ENCODE measurements at regions of chr18 and their contacts with region 1.

Region 1: DNA sequence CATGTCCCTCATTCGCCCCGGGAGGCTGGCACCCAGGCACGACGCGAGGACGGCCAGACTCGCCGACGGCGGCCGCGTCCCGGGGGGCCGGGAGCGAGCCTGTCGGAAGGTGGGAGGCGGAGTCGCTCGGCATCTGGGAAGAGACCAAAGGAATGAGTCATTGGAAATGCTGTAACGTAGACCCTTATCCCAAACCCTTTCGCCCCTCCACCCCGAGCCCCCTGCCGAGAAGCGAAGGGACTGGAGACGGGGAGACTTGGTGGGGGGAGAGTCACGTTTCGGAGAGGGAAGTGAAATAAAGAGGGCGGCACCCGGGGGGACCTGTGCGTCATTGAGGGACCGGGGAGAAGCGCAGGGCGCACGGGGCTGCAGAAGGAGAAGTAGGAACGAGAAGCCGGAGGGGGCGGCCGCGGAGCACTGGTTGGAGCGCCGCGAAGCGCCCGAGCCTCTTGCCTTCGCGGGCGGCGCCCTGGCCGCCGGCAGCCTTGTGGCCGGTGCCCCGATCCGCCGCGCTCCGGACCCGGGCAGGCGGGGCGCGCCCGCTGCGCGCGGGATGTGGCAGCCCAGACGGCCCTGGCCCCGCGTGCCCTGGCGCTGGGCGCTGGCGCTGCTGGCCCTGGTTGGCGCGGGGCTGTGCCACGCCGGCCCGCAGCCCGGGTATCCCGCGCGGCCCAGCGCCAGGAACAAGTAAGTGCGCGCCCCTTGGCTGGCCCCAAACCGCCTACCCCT is at the start of gene EMILIN2:
- DNase-seq: peak; percentile 96
- total RNA-seq, gene EMILIN2: 21.0 to 32.4 TPM

Region 2: GRCh38 chr18:2368102-2368501 is 478.7 kb before region 1 on chr18:
- intact Hi-C with region 1: loop called in 1 of 2 experiments (anchors 5 kb)
- DNase-seq: no peak

Region 3: GRCh38 chr18:2906704-2907549 is 60.1 kb after region 1 on chr18:
- intact Hi-C with region 1: loop called in 1 of 2 experiments (anchors 2 kb)
- DNase-seq: peak; percentile 81

Region 4: DNA sequence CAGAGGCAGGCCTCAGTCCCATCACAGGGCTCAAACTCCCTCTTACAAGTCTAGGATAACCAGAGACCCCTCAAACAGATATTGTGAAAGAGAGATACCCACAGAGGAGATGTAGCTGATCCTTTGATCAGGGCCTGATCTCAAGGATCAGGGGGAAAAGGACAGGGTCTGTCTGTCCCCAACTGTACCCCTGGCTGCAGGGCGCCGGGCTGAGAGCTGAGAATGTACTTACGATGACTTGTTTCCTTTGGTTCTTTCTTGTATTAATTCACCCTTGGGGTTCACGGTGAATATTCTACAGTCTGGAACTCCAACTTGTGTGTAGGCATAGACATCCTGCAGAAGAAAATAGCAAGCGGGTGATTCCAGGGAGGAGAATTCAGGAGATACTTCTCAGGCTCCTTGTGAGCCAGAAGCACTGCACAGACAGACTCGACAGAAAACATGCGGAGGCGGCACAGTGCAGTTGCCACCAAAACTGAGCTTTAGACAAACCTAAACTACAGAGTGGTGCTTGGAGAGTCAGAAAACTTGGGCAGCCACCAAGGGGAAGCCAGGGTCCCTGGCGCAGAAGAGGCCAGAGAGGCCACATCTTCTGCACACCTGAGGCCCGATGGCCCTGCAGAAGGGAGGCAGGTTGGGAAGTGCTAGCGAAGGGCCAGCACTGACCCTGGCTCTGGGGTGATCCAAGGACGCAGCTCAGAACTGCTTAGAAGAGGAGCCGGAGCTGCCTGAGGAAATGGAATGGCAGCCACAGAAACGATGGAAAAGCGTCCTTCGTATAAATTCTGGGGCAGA is 73.9 kb after region 1 on chr18:
- intact Hi-C with region 1: no loop called
- DNase-seq: no peak

Region 5: DNA sequence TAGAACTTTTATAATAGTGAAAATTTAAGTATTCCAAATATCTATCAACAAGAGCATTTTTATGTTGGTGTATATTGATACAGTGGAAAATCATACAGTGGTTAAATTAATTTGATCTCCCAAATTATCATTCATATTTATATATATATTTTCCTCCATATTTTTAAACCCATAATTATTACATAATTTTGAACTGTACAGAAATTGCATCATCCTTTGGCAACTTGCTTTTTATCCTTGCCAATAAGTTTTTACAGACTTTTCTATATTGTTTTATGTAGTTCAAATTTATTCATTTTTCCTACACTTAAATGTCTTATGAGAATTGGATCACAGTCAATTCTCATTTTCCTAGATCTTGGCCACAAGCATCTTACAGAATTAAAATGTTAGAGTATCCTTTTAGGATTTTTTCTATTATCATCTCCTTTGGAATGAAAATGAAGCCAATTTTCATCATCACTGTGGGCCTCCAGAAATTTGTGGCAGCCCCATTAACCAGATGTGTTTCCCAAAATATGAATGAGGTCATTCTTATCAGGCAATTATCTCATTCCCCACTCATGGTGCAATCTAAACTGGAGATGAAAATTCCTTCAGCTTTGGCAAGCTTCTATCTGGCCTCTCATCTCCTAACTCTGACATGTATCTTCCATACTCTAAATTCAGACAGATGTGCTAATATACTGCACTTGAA is 1702.5 kb after region 1 on chr18:
- intact Hi-C with region 1: no loop called
- DNase-seq: no peak

Measured in posterior vena cava (tissue), 2 donors.